Right ventricle myocardium inferior (tissue), 1 donor: ENCODE measurements at regions of chrX and their contacts with region 1.

Region 1: DNA sequence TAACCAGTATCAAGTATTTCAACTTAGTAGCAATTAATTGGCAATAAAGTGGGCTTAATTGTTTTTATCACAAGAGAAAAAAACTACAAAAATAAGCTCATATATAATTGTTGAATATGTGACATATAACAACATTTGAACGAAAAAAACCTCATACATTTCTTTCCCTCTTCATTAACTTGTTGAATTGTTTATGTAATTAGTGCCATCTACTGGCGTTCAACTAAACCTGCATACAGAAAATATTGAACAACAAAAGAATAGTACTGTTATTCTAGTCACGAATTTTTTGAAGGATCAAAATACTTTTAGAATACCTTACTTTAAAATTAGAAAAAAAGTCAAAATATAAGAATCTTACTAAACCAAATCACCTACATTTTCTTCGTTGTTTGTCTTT is 586.5 kb upstream of the FTHL17 start:
- DNase-seq: no peak
- ATAC-seq: no peak

Region 2: DNA sequence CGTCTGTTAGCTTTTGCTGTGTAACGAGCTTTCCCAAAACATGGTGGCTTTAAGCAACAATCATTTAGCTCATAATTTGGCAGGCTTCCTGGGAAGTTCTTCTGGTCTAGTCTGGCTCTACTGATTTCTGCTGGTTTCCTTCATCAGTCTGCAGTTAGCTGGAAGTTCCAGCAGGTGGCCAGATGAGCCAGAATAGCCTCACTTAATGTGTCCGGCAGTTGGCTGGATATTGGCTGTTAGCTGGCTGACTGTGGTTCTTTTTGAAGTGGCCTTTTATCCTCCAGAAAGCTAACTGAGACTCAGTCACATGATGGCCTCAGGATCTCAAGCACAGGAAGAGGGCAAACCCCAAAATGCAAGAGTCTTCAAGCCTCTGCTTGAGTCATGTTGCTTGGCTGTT is 621.5 kb before region 1 on chrX:
- intact Hi-C with region 1: loop called (anchors 5 kb)
- DNase-seq: no peak
- ATAC-seq: no peak

Region 3: DNA sequence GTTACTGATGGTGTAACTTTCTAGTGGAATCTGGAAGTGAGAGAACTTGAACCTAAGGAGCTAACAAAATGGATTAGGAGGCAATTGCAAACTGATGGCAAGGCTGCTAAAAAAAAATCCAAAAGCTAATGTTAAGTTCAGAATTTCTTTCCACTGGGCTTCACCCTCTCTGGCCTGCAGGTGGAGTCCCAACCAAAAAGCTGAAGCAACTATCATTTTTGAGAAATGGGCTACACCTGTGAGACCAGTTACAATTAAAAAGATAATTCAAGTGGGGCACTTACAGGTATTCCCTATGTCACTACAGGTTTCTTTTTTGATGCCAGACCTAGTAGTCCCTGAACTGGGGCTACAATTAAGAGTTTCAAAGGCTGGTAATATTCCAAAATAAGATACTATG is 444.4 kb before region 1 on chrX:
- intact Hi-C with region 1: loop called (anchors 10 kb)
- DNase-seq: no peak
- ATAC-seq: no peak

Region 4: DNA sequence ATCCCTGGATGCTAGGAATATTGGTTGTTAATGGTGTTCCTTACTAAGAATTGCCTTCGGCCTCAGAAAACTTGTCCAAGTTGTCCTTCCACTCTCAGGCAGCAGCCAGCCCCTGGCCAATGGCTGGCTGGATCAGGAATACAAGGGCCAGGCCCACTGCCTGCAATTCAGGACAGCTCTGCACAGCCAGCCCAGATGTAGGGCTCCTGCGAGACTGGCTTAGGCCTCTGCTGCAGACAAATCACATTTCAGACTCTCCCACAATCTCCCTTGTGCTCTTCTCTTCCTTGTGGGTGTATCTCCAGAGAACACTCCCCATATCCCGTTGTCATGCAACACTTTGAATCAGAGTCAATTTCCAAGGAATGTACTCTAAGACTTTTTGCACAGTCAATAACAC is 161.1 kb after region 1 on chrX:
- intact Hi-C with region 1: no loop called
- DNase-seq: no peak
- ATAC-seq: peak; percentile 81